ENCODE measurements at regions of chr9 and their contacts with region 1.

Region 1: GRCh38 chr9:5714501-5715401 is 85.8 kb downstream of the RIC1 start:
- DNase-seq: peak; percentile 30
- H3K4me3 Mint-ChIP-seq: no peak overlapping the region
- H3K27ac Mint-ChIP-seq: no peak overlapping the region
- H3K4me1 Mint-ChIP-seq: peaks cover 27% of the 10 kb centered on the region
- H3K27me3 Mint-ChIP-seq: no peaks in the 10 kb centered on the region
- CTCF ChIP-seq: no peak

Region 2: GRCh38 chr9:5450359-5451091 is 264.2 kb before region 1 on chr9 and contains the start of gene CD274:
- CTCF ChIA-PET with region 1: no interaction called
- intact Hi-C with region 1: loop called (anchors 5 kb)
- DNase-seq: peak; percentile 90
- H3K4me3 Mint-ChIP-seq: peak within 1 kb of the TSS; percentile 79
- H3K27ac Mint-ChIP-seq: peak within 1 kb of the TSS; percentile 76
- H3K4me1 Mint-ChIP-seq: peaks cover 41% of the 10 kb centered on the region
- H3K27me3 Mint-ChIP-seq: no peaks in the 10 kb centered on the region
- CTCF ChIP-seq: no peak
- total RNA-seq, gene CD274: 1.9 and 3.6 TPM in 2 replicates

Region 3: GRCh38 chr9:5608298-5609225 is 106.2 kb before region 1 on chr9:
- CTCF ChIA-PET with region 1: interaction called, 4 read pairs
- intact Hi-C with region 1: loop called (anchors 5 kb)
- DNase-seq: peak; percentile 15
- H3K4me3 Mint-ChIP-seq: peak overlapping the region; percentile 74
- H3K27ac Mint-ChIP-seq: no peak overlapping the region
- H3K4me1 Mint-ChIP-seq: peaks cover 7% of the 10 kb centered on the region
- H3K27me3 Mint-ChIP-seq: no peaks in the 10 kb centered on the region
- CTCF ChIP-seq: no peak

Region 4: DNA sequence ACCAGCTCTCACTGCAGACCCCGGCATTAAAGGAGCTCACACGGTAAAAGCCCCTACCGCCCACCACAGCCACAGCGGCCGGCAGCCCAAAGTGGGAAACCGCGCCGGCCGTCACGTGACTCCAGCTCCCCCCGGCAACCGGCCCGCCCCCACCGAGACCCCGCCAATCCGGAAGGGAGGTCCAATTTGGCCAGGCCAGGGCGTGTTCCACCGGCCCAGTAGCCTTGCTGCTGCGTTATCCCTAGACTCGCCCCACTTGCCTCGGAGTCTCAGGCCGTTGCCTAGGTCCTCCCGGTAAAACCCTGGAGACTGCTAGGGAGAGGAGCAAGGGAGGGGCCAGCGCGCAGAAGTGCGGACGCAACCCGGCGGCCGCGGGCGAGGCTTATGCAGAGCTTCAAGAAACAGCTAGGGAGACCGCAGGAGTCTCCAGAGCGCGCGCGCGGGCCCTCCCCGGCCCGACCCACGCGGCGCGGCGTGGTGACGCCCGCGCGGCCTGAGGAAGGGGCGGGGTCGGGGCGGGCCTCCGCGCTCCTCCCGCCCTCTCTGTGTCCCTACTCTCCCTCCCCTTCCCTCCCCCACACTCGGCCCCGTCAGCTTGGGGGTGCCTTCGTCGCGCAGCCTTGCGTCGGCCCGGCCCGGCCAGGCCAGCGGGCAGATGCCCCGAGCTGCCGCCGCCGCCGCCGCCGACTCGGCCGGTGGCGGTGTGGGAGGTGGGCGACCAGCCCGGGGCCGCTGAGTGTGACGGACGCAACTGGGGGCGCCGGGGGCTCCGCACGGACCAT is 86.0 kb before region 1 on chr9 and contains the start of gene RIC1:
- CTCF ChIA-PET with region 1: interaction called, 4 read pairs
- intact Hi-C with region 1: loop called (anchors 2 kb)
- DNase-seq: peak; percentile 80
- H3K4me3 Mint-ChIP-seq: peak within 1 kb of the TSS; percentile 97
- H3K27ac Mint-ChIP-seq: peak within 1 kb of the TSS; percentile 93
- H3K4me1 Mint-ChIP-seq: peaks cover 21% of the 10 kb centered on the region
- H3K27me3 Mint-ChIP-seq: no peaks in the 10 kb centered on the region
- CTCF ChIP-seq: no peak
- total RNA-seq, gene RIC1: 10.9 and 11.4 TPM in 2 replicates

Region 5: GRCh38 chr9:5947912-5948311 is 233.2 kb after region 1 on chr9:
- CTCF ChIA-PET with region 1: no interaction called
- intact Hi-C with region 1: no loop called
- DNase-seq: no peak
- H3K4me3 Mint-ChIP-seq: no peak overlapping the region
- H3K27ac Mint-ChIP-seq: no peak overlapping the region
- H3K4me1 Mint-ChIP-seq: peaks cover 6% of the 10 kb centered on the region
- H3K27me3 Mint-ChIP-seq: no peaks in the 10 kb centered on the region
- CTCF ChIP-seq: no peak

Measured in Calu3 (cell line).